Right ventricle myocardium inferior (tissue), 1 donor: ENCODE measurements at regions of chr16 and their contacts with region 1.

Region 1: GRCh38 chr16:66516808-66517585 is 32.9 kb downstream of the TK2 start:
- DNase-seq: peak; percentile 96
- ATAC-seq: peak; percentile 96

Region 2: DNA sequence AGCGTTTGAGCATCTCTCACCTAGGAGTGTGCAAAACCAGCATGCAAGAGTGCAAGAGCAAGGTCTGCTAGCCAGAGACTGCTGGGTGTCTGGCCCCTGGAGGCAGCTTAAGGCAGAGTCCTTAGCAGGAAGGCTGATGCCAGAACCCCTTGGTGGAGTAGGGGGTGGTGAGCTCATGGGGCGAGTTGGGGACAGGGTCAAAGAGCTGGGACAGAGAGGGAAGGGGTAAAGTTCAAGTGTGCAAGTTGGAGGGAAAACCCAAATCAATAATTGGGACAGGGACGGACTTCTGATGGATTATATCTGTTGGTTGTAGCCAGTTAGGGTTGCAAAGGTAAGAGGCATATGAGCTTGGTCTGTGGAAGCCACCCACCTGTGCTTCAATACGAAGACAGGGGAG is 594.1 kb before region 1 on chr16:
- intact Hi-C with region 1: no loop called
- DNase-seq: no peak
- ATAC-seq: no peak

Region 3: GRCh38 chr16:66444049-66444481 is 72.9 kb before region 1 on chr16:
- intact Hi-C with region 1: no loop called
- DNase-seq: no peak
- ATAC-seq: no peak

Region 4: GRCh38 chr16:66552286-66553177 is 35.5 kb after region 1 on chr16 and contains the start of gene CKLF:
- intact Hi-C with region 1: loop called (anchors 1 kb)
- DNase-seq: peak; percentile 95
- ATAC-seq: peak; percentile 84
- total RNA-seq, gene CKLF: 14.7 TPM